Activated CD4-positive, alpha-beta T cell treated with anti-CD3 and anti-CD28 coated beads, Interleukin-2, amount 10 ng/mL, durations not matched to agents 7 days and 5 days (primary cell): ENCODE measurements at regions of chr12 and their contacts with region 1.

Region 1: GRCh38 chr12:49347384-49348237 is 923 bp downstream of the DNAJC22 start:
- DNase-seq: peak; percentile 75
- H3K4me3 Mint-ChIP-seq: peak overlapping the region; percentile 48
- H3K27ac Mint-ChIP-seq: no peak overlapping the region
- H3K4me1 Mint-ChIP-seq: peaks cover 24% of the 10 kb centered on the region
- H3K27me3 Mint-ChIP-seq: peaks cover 66% of the 10 kb centered on the region

Region 2: DNA sequence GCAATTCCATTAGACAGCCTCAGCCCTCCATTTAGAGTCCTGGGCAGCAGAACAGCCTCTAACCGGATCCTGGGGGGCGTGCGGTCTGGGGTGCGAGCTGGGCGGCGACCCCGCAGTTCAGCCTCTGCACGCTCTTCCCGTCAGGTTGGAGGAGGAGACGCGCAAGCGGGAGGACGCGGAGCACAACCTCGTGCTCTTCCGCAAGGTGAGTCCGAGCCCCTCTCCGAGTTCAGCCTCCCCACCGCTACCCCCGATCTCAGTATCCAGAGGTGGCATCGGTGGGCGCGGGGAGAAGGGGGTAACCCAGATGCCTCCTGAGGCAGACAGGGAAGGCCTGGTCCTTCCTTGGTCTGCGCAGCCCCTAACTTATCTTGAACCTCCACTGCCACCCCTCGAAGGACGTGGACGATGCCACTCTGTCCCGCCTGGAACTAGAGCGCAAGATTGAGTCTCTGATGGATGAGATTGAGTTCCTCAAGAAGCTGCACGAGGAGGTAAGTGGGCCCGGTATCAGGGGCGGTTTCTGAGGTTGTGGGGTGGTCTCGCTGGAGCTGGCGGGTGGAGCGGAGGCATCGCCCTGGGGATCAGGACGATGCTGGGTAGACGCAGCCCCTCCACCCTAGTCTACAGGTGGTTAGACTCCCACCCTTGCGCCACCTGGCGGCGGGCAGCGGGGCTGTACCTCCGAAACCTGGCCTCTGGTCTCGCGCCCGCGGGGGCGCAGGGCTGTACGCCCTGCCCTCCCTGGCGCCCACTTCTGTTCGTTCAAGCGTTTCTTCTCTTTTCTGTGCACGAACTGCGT is 51.4 kb before region 1 on chr12:
- CTCF ChIA-PET with region 1: interaction called, 47 read pairs
- POLR2A ChIA-PET with region 1: interaction called, 6 read pairs
- DNase-seq: peak; percentile 61
- H3K4me3 Mint-ChIP-seq: peak overlapping the region; percentile 56
- H3K27ac Mint-ChIP-seq: no peak overlapping the region
- H3K4me1 Mint-ChIP-seq: peaks cover 29% of the 10 kb centered on the region
- H3K27me3 Mint-ChIP-seq: peaks cover 53% of the 10 kb centered on the region

Region 3: DNA sequence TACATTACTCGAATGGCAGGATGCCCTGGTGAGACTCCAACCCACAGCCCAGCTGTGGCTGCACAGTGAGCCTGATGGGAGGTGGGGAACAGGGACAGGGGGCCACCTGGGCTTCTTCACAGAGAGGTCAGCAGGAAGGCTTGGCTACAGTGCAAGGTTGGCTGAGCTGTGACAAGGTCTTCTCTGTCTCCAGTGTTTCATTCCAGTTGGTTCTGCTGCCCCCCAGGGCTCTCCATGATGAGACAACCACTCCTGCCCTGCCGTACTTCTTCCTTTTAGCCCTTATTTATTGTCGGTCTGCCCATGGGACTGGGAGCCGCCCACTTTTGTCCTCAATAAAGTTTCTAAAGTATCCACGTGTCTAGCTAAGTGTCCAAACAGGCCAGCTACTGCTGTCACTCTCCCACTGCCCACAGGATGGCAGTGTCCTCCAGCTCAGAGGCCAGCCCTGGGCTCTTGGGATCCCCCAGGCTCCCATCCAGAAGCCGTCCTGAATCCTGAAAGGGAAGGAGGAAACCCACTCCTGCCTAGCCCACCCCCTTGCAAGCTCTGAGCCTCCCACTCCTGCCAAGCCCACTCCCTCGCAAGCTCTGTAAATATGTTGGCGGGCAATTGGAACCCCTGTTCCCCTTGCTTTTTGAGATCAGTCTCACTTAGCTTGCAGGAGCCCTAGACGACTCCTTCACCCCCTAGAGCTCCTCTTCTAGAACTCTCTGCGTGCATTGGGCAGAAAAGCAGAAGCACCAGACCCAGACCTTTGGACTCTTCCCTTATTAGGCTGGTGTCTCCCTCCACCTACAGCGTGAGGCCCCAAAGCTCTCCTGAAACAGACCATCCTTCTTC is 16.0 kb before region 1 on chr12:
- CTCF ChIA-PET with region 1: interaction called, 30 read pairs
- POLR2A ChIA-PET with region 1: no interaction called
- DNase-seq: no peak
- H3K4me3 Mint-ChIP-seq: no peak overlapping the region
- H3K27ac Mint-ChIP-seq: peak overlapping the region; percentile 34
- H3K4me1 Mint-ChIP-seq: peaks cover 21% of the 10 kb centered on the region
- H3K27me3 Mint-ChIP-seq: peaks cover 38% of the 10 kb centered on the region

Region 4: GRCh38 chr12:49358483-49359141 is 11.0 kb after region 1 on chr12:
- CTCF ChIA-PET with region 1: interaction called, 36 read pairs
- POLR2A ChIA-PET with region 1: no interaction called
- DNase-seq: peak; percentile 73
- H3K4me3 Mint-ChIP-seq: no peak overlapping the region
- H3K27ac Mint-ChIP-seq: no peak overlapping the region
- H3K4me1 Mint-ChIP-seq: peaks cover 3% of the 10 kb centered on the region
- H3K27me3 Mint-ChIP-seq: peaks cover 33% of the 10 kb centered on the region

Region 5: DNA sequence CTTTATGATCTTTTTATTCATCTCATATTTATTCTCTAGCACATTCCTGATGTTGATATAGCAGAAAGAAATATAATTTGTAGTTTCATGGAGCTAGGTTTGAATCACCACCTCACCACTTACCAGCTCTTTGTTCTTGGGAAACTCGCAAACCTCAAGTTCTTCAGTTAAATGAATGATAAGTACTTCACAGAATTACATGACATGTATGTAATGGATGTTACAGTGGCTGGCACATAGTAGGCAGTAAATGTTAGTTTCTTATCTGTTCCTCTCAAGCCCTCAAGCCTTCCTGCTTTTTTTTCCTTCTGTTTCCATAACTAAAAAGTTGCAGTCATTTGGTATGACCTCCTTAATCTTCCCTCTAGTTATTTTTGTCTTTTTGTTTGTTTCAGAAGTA is 74.5 kb after region 1 on chr12:
- CTCF ChIA-PET with region 1: no interaction called
- POLR2A ChIA-PET with region 1: no interaction called
- DNase-seq: no peak
- H3K4me3 Mint-ChIP-seq: no peak overlapping the region
- H3K27ac Mint-ChIP-seq: no peak overlapping the region
- H3K4me1 Mint-ChIP-seq: peaks cover 3% of the 10 kb centered on the region
- H3K27me3 Mint-ChIP-seq: no peaks in the 10 kb centered on the region

Region 6: GRCh38 chr12:49515266-49515665 is 167.7 kb after region 1 on chr12:
- CTCF ChIA-PET with region 1: interaction called, 34 read pairs
- POLR2A ChIA-PET with region 1: no interaction called
- DNase-seq: no peak
- H3K4me3 Mint-ChIP-seq: no peak overlapping the region
- H3K27ac Mint-ChIP-seq: no peak overlapping the region
- H3K4me1 Mint-ChIP-seq: peaks cover 2% of the 10 kb centered on the region
- H3K27me3 Mint-ChIP-seq: no peaks in the 10 kb centered on the region